A549 (cell line): ENCODE measurements at regions of chr15 and their contacts with region 1.

Region 1: GRCh38 chr15:75367913-75368688 is at the start of gene MAN2C1:
- DNase-seq: peak; percentile 98 to 99
- ATAC-seq: peak; percentile 90 to 93
- H3K4me3 ChIP-seq: peak within 1 kb of the TSS; percentile 81
- H3K27ac ChIP-seq: peak within 1 kb of the TSS; percentile 93 to 95
- H3K4me1 ChIP-seq: peaks cover 21% of the 10 kb centered on the region
- CTCF ChIP-seq: peak; percentile 95
- EP300 ChIP-seq: no peak
- POLR2A ChIP-seq: peak; percentile 98
- RAD21 ChIP-seq: peak; percentile 73 to 79
- polyA plus RNA-seq, gene MAN2C1: 47.7 and 66.3 TPM in 2 replicates

Region 2: GRCh38 chr15:75138016-75138999 is 229.8 kb before region 1 on chr15:
- CTCF ChIA-PET with region 1: no interaction called
- POLR2A ChIA-PET with region 1: no interaction called
- DNase-seq: peak in 1 of 2 experiments; percentile 29
- ATAC-seq: peak; percentile 13 to 61; a peak in 3 of 6 replicates
- H3K4me3 ChIP-seq: no peak overlapping the region
- H3K27ac ChIP-seq: peak overlapping the region in 1 of 2 experiments; percentile 31; a peak in 2 of 6 replicates
- H3K4me1 ChIP-seq: 0 out of 3 replicates have a peak, but pooled peaks cover 5% of the 10 kb centered on the region
- CTCF ChIP-seq: no peak
- EP300 ChIP-seq: no peak
- POLR2A ChIP-seq: no peak
- RAD21 ChIP-seq: no peak

Region 3: DNA sequence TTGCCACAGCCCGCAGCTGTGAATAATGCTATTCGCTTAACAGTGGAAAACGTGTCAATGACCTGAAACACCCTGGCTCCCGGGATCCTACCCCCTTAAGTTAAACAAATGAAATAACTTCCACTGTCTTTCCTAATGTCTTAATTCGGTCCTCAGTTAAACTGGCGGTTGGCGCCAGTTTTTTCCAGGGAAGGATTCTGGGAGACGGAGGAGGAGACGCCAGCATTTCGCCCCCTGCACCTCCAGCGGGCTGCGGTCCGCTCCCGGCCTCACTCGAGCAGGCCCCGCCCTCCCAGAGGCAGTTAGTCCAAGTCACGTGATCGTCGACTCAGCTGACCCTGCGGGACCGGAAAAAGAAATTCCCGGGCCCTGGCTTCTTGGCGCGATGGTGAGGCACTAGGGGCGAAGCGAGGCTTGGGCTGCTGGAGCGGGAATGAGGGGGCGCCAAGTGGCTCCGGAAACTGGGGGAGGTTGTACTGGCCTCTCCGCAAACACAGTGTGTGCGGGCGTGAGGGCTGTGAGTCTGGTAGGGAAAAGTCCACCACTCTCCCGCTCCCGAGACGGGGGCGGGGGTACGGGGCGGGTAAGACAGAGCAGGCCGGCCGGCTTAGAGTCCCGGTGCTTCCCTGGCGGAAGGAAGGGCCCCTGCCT is 32.3 kb before region 1 on chr15 and contains the start of gene COMMD4:
- CTCF ChIA-PET with region 1: interaction called, 10 read pairs
- POLR2A ChIA-PET with region 1: interaction called, 3 read pairs
- DNase-seq: peak; percentile 72 to 98
- ATAC-seq: peak; percentile 90 to 93
- H3K4me3 ChIP-seq: peak within 1 kb of the TSS; percentile 60
- H3K27ac ChIP-seq: peak within 1 kb of the TSS; percentile 72 to 91
- H3K4me1 ChIP-seq: peaks cover 11% of the 10 kb centered on the region; the same call in 2 of the 3 replicates
- CTCF ChIP-seq: no peak
- EP300 ChIP-seq: no peak
- POLR2A ChIP-seq: peak; percentile 81
- RAD21 ChIP-seq: no peak
- polyA plus RNA-seq, gene COMMD4: 88.0 and 98.3 TPM in 2 replicates

Region 4: DNA sequence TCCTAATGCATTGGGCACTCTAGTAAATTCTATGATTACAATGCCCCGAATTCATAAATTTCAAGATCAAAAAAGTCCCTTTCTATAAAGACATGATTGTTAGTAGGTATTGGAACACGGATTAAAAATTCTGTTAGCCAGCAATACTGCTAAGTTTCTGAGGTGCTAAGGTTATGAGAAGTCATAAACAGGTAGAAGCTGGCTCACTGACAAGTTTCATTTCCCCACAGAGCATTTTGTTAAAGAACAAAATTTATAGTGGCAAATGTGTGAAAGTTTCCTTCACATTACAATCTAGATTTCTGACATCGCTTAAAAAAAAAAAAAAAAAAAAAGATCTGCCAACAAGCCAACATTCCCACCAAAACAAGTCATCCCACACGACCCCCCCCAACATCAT is 12.7 kb after region 1 on chr15:
- CTCF ChIA-PET with region 1: interaction called, 42 read pairs
- POLR2A ChIA-PET with region 1: interaction called, 9 read pairs
- DNase-seq: no peak
- ATAC-seq: no peak
- H3K4me3 ChIP-seq: no peak overlapping the region
- H3K27ac ChIP-seq: no peak overlapping the region
- H3K4me1 ChIP-seq: no peaks in the 10 kb centered on the region
- CTCF ChIP-seq: no peak
- EP300 ChIP-seq: no peak
- POLR2A ChIP-seq: no peak
- RAD21 ChIP-seq: no peak

Region 5: GRCh38 chr15:75436861-75437260 is 68.8 kb after region 1 on chr15:
- CTCF ChIA-PET with region 1: interaction called, 11 read pairs
- POLR2A ChIA-PET with region 1: interaction called, 3 read pairs
- DNase-seq: no peak
- ATAC-seq: peak; percentile 18 to 30; a peak in 1 of 6 replicates
- H3K4me3 ChIP-seq: no peak overlapping the region
- H3K27ac ChIP-seq: no peak overlapping the region
- H3K4me1 ChIP-seq: no peaks in the 10 kb centered on the region
- CTCF ChIP-seq: no peak
- EP300 ChIP-seq: no peak
- POLR2A ChIP-seq: no peak
- RAD21 ChIP-seq: no peak

Region 6: GRCh38 chr15:75625542-75626347 is 257.6 kb after region 1 on chr15 and contains the start of gene SNUPN:
- CTCF ChIA-PET with region 1: interaction called, 14 read pairs
- POLR2A ChIA-PET with region 1: interaction called, 26 read pairs
- DNase-seq: peak; percentile 98 to 99
- ATAC-seq: peak; percentile 95
- H3K4me3 ChIP-seq: peak within 1 kb of the TSS; percentile 96
- H3K27ac ChIP-seq: peak within 1 kb of the TSS; percentile 98 to 100
- H3K4me1 ChIP-seq: peaks cover 26% of the 10 kb centered on the region
- CTCF ChIP-seq: no peak
- EP300 ChIP-seq: no peak
- POLR2A ChIP-seq: peak; percentile 90
- RAD21 ChIP-seq: no peak
- polyA plus RNA-seq, gene SNUPN: 33.6 and 38.5 TPM in 2 replicates

Region 7: GRCh38 chr15:75684642-75685041 is 316.5 kb after region 1 on chr15:
- CTCF ChIA-PET with region 1: interaction called, 55 read pairs
- POLR2A ChIA-PET with region 1: interaction called, 3 read pairs
- DNase-seq: peak in 1 of 2 experiments; percentile 47
- ATAC-seq: no peak
- H3K4me3 ChIP-seq: no peak overlapping the region
- H3K27ac ChIP-seq: no peak overlapping the region
- H3K4me1 ChIP-seq: no peaks in the 10 kb centered on the region
- CTCF ChIP-seq: no peak
- EP300 ChIP-seq: no peak
- POLR2A ChIP-seq: no peak
- RAD21 ChIP-seq: peak in 1 of 2 experiments; percentile 25; a peak in 1 of 5 replicates